ENCODE measurements at regions of chr13 and their contacts with region 1.

Region 1: GRCh38 chr13:47459512-47459911 is 541.6 kb downstream of the SUCLA2 start:
- DNase-seq: no peak
- H3K4me3 ChIP-seq: no peak overlapping the region
- H3K4me3 Mint-ChIP-seq: no peak overlapping the region
- H3K27ac Mint-ChIP-seq: no peak overlapping the region
- H3K4me1 ChIP-seq: no peaks in the 10 kb centered on the region
- H3K4me1 Mint-ChIP-seq: no peaks in the 10 kb centered on the region
- H3K27me3 ChIP-seq: no peaks in the 10 kb centered on the region; the same call in 1 of the 2 replicates
- H3K27me3 Mint-ChIP-seq: peaks cover 2% of the 10 kb centered on the region
- CTCF ChIP-seq: peak in 1 of 2 experiments; percentile 13

Region 2: GRCh38 chr13:46831588-46832194 is 627.8 kb before region 1 on chr13:
- CTCF ChIA-PET with region 1: interaction called, 3 read pairs
- POLR2A ChIA-PET with region 1: no interaction called
- intact Hi-C with region 1: loop called (anchors 5 kb)
- DNase-seq: peak in 1 of 2 experiments; percentile 56
- H3K4me3 ChIP-seq: no peak overlapping the region
- H3K4me3 Mint-ChIP-seq: no peak overlapping the region
- H3K27ac Mint-ChIP-seq: no peak overlapping the region
- H3K4me1 ChIP-seq: no peaks in the 10 kb centered on the region
- H3K4me1 Mint-ChIP-seq: no peaks in the 10 kb centered on the region
- H3K27me3 ChIP-seq: no peaks in the 10 kb centered on the region
- H3K27me3 Mint-ChIP-seq: peaks cover 14% of the 10 kb centered on the region
- CTCF ChIP-seq: peak; percentile 77 to 86

Region 3: GRCh38 chr13:47661076-47661475 is 201.6 kb after region 1 on chr13:
- CTCF ChIA-PET with region 1: no interaction called
- POLR2A ChIA-PET with region 1: no interaction called
- intact Hi-C with region 1: no loop called
- DNase-seq: no peak
- H3K4me3 ChIP-seq: no peak overlapping the region
- H3K4me3 Mint-ChIP-seq: no peak overlapping the region
- H3K27ac Mint-ChIP-seq: no peak overlapping the region
- H3K4me1 ChIP-seq: no peaks in the 10 kb centered on the region
- H3K4me1 Mint-ChIP-seq: no peaks in the 10 kb centered on the region
- H3K27me3 ChIP-seq: no peaks in the 10 kb centered on the region
- H3K27me3 Mint-ChIP-seq: peaks cover 6% of the 10 kb centered on the region
- CTCF ChIP-seq: no peak